ENCODE measurements at regions of chr7 and their contacts with region 1.

Region 1: GRCh38 chr7:133961724-133962123 is 165.4 kb upstream of the LRGUK start:
- H3K4me3 Mint-ChIP-seq: no peak overlapping the region
- H3K27ac Mint-ChIP-seq: no peak overlapping the region
- H3K4me1 Mint-ChIP-seq: no peaks in the 10 kb centered on the region
- H3K27me3 Mint-ChIP-seq: no peaks in the 10 kb centered on the region

Region 2: DNA sequence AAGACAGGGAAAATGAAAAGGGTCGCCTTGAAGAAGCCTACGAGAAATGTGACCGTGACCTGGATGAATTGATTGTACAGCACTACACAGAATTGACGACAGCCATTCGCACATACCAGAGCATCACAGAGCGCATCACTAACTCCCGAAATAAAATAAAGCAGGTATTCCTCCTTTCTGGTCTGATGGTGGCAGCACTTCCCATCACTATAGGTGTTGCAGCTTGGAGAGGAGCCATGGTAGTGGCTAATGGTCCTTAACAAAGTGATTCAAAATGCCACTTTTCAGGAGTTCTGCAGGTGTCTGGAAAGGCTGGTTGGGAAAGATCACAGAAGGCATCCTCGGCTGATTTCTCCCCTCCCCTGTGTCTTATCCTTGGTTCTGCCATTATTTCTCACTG is 686.7 kb before region 1 on chr7:
- intact Hi-C with region 1: no loop called
- H3K4me3 Mint-ChIP-seq: no peak overlapping the region
- H3K27ac Mint-ChIP-seq: no peak overlapping the region
- H3K4me1 Mint-ChIP-seq: no peaks in the 10 kb centered on the region
- H3K27me3 Mint-ChIP-seq: no peaks in the 10 kb centered on the region

Region 3: GRCh38 chr7:134051020-134051419 is 89.3 kb after region 1 on chr7:
- intact Hi-C with region 1: loop called (anchors 5 kb)
- H3K4me3 Mint-ChIP-seq: no peak overlapping the region
- H3K27ac Mint-ChIP-seq: no peak overlapping the region
- H3K4me1 Mint-ChIP-seq: no peaks in the 10 kb centered on the region
- H3K27me3 Mint-ChIP-seq: peaks cover 18% of the 10 kb centered on the region